Heart right ventricle (tissue), 16 donors: ENCODE measurements at regions of chr6 and their contacts with region 1.

Region 1: GRCh38 chr6:95469511-95469910 is 107.8 kb upstream of the MANEA start:
- DNase-seq: no peak
- ATAC-seq: no peak
- H3K4me3 ChIP-seq: no peak overlapping the region
- H3K27ac ChIP-seq: no peak overlapping the region
- H3K4me1 ChIP-seq: no peaks in the 10 kb centered on the region
- H3K27me3 ChIP-seq: no peaks in the 10 kb centered on the region
- CTCF ChIP-seq: no peak

Region 2: DNA sequence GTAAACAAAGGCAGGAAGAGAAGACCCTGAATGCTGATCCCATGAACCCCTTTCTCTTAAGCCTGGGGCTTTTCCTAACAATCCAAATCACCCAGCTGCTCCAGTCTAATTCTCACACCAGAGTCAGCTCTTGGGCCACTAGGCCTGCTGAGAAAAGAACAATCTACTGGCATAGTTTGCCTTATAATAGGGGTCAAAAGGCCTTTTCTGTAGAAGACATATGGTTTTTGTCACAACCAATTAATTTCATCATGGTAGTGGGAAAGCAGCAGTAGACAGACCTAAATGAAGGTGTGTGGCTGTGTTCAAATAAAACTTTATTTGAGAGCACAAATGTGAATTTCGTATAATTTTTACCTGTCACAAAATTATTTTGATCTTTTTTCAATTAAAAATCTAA is 1055.5 kb before region 1 on chr6:
- intact Hi-C with region 1: no loop called
- DNase-seq: no peak
- ATAC-seq: no peak
- H3K4me3 ChIP-seq: no peak overlapping the region
- H3K27ac ChIP-seq: no peak overlapping the region
- H3K4me1 ChIP-seq: no peaks in the 10 kb centered on the region
- H3K27me3 ChIP-seq: no peaks in the 10 kb centered on the region
- CTCF ChIP-seq: no peak

Region 3: DNA sequence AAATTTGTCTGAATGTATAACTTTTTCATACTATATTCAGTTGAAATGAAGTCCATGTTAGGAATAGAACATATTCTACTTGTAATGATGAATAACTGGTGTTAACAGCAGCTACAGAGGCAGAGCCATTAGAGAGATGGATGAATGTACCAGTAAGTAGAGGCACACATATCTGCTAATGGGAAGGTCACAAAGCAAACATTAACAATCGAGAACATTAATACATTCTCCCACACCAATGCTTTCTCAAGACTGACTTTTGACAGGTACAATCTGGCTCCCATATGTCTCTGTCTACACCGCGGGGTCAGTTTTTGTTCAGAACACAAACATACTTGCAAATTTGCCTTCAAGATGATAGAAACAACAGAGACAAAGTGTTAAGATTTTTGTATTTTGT is 668.2 kb before region 1 on chr6:
- intact Hi-C with region 1: loop called in 1 of 10 experiments (anchors 10 kb)
- DNase-seq: no peak
- ATAC-seq: no peak
- H3K4me3 ChIP-seq: no peak overlapping the region
- H3K27ac ChIP-seq: no peak overlapping the region
- H3K4me1 ChIP-seq: no peaks in the 10 kb centered on the region
- H3K27me3 ChIP-seq: no peaks in the 10 kb centered on the region
- CTCF ChIP-seq: no peak

Region 4: GRCh38 chr6:95390062-95390461 is 79.4 kb before region 1 on chr6:
- intact Hi-C with region 1: no loop called
- DNase-seq: no peak
- ATAC-seq: no peak
- H3K4me3 ChIP-seq: no peak overlapping the region
- H3K27ac ChIP-seq: no peak overlapping the region
- H3K4me1 ChIP-seq: no peaks in the 10 kb centered on the region
- H3K27me3 ChIP-seq: no peaks in the 10 kb centered on the region
- CTCF ChIP-seq: no peak

Region 5: GRCh38 chr6:95501032-95501904 is 31.8 kb after region 1 on chr6:
- intact Hi-C with region 1: no loop called
- DNase-seq: no peak
- ATAC-seq: no peak
- H3K4me3 ChIP-seq: no peak overlapping the region
- H3K27ac ChIP-seq: no peak overlapping the region
- H3K4me1 ChIP-seq: no peaks in the 10 kb centered on the region
- H3K27me3 ChIP-seq: no peaks in the 10 kb centered on the region
- CTCF ChIP-seq: no peak

Region 6: DNA sequence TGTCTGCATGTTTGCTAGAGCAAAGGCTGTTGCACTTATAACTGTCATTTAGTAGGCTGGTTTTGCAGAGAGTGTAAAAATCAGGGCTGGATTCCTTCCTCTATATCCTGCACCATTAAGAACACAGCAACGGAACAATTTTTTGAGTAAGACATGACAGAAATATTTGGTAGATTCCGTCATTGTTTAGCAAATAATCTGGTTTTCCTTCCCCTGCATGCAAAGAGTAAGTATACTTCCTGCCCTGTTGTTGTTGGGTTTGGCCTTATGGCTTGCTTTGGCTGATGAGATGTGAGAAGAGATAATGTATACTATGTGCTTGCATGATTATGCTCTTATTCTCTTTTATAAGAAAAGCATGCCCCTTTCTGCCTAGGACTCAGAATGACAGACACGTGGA is 131.6 kb after region 1 on chr6:
- intact Hi-C with region 1: loop called in 1 of 10 experiments (anchors 2 kb)
- DNase-seq: no peak
- ATAC-seq: no peak
- H3K4me3 ChIP-seq: no peak overlapping the region
- H3K27ac ChIP-seq: no peak overlapping the region
- H3K4me1 ChIP-seq: no peaks in the 10 kb centered on the region
- H3K27me3 ChIP-seq: no peaks in the 10 kb centered on the region
- CTCF ChIP-seq: no peak